Activated CD4-positive, alpha-beta T cell treated with anti-CD3 and anti-CD28 coated beads for 36 hours (primary cell): ENCODE measurements at regions of chr17 and their contacts with region 1.

Region 1: GRCh38 chr17:9371019-9371418 is 204.6 kb downstream of the STX8 start:
- DNase-seq: peak; percentile 6
- ATAC-seq: peak; percentile 93
- H3K4me3 Mint-ChIP-seq: no peak overlapping the region
- H3K27ac Mint-ChIP-seq: no peak overlapping the region
- H3K4me1 Mint-ChIP-seq: peaks cover 12% of the 10 kb centered on the region
- H3K27me3 Mint-ChIP-seq: no peaks in the 10 kb centered on the region

Region 2: DNA sequence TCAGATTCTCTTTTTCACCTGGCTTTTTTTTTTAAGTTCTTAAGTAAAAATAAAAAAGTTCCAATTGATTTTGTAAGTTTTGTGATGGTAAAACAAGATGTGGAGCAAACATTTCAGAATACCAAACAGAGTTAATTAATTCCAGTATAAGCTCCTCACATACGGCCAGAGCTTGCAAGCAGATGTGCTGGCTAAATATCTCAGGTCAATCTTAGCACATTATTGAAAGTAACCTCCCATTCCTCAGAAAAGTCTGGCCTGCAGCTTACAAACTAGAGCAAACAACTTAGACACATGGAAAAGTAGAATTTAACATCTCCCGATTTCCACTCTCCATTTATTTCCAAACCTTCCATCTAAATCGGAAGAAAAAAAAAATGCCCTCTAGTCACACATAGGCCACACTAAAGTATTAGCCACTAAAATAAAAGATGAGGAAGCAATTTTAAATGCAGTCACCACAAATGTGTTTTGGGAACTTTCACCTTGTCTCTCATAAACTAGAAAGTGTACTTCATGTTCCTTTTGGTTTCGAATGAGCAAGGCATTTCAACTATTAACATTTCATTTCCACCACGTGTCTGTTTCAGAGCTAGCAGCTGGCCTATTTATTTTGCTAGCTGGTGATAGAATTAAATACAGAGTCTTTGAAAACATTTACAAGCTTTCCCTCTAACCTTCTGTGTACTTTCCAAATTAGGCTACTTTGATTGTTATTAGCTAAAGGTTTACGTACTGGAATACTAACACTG is 61.3 kb after region 1 on chr17:
- CTCF ChIA-PET with region 1: no interaction called
- POLR2A ChIA-PET with region 1: no interaction called
- intact Hi-C with region 1: loop called in 1 of 2 experiments (anchors 10 kb)
- DNase-seq: no peak
- ATAC-seq: no peak
- H3K4me3 Mint-ChIP-seq: no peak overlapping the region
- H3K27ac Mint-ChIP-seq: no peak overlapping the region
- H3K4me1 Mint-ChIP-seq: peaks cover 13% of the 10 kb centered on the region
- H3K27me3 Mint-ChIP-seq: no peaks in the 10 kb centered on the region